Mammary epithelial cell (primary cell): ENCODE measurements at regions of chr9 and their contacts with region 1.

Region 1: GRCh38 chr9:35116898-35117551 is 1.4 kb upstream of the ATOSB start:
- DNase-seq: peak; percentile 84
- H3K4me3 ChIP-seq: peak overlapping the region; percentile 44 to 84 (median 60)
- H3K27ac ChIP-seq: no peak overlapping the region
- H3K4me1 ChIP-seq: peaks cover 23% of the 10 kb centered on the region
- H3K27me3 ChIP-seq: no peaks in the 10 kb centered on the region
- CTCF ChIP-seq: peak; percentile 95 to 99

Region 2: GRCh38 chr9:35071814-35072460 is 45.1 kb before region 1 on chr9:
- CTCF ChIA-PET with region 1: interaction called, 3 read pairs
- dilution Hi-C with region 1: no loop called
- in situ Hi-C with region 1: no loop called
- intact Hi-C with region 1: loop called (anchors 1 kb)
- DNase-seq: peak; percentile 86
- H3K4me3 ChIP-seq: peak overlapping the region; percentile 92 to 95 (median 94)
- H3K27ac ChIP-seq: peak overlapping the region; percentile 92
- H3K4me1 ChIP-seq: peaks cover 34% of the 10 kb centered on the region
- H3K27me3 ChIP-seq: no peaks in the 10 kb centered on the region
- CTCF ChIP-seq: peak in 1 of 2 donors; percentile 38

Region 3: GRCh38 chr9:35161713-35162604 is 44.9 kb after region 1 on chr9 and contains the start of gene UNC13B:
- CTCF ChIA-PET with region 1: no interaction called
- dilution Hi-C with region 1: no loop called
- in situ Hi-C with region 1: no loop called
- intact Hi-C with region 1: loop called (anchors 1 kb)
- DNase-seq: peak; percentile 91
- H3K4me3 ChIP-seq: peak within 1 kb of the TSS; percentile 71 to 97 (median 90)
- H3K27ac ChIP-seq: peak within 1 kb of the TSS; percentile 53
- H3K4me1 ChIP-seq: peaks cover 13% of the 10 kb centered on the region
- H3K27me3 ChIP-seq: no peaks in the 10 kb centered on the region
- CTCF ChIP-seq: peak in 1 of 2 donors; percentile 28
- total RNA-seq, gene UNC13B: 20.0 to 22.3 TPM

Region 4: DNA sequence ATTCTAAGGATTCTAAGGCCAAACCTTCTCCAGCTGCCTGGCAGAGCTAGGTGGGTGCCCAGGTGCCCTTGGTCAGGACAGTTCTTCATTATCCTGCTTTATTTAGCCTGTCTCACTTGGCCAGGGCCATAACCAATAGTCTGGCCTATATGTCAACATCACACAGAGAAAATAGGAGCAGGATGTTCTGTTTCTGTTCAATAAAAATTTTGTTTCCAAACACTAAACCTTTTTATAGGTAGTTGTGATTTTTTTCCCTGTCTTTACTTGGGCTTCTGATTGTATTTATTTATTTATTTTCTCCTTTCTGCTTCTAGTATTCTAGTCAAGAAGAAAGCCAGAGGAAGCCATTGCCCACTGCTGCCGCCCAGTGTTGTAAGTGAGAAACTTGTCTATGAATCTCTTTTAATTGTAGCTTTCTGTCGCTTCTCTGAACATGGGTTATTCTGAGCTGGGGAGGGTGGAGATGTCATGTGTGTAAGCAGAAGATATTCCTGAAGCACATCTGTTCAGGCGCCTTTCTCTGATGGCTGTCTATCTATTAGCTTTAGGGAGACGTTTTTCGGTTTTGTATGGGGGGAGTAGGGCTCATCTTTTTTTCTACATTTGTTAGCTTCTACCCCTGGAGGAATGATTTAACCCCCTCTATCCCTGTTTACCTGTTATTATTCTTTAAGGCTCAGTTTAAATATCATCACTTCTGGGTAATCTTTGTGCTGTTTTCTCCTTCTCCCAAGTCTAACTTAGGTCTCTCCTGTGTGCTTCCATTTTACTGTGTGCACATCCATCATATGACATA is 141.8 kb after region 1 on chr9:
- CTCF ChIA-PET with region 1: interaction called, 6 read pairs
- dilution Hi-C with region 1: no loop called
- in situ Hi-C with region 1: loop called (anchors 5 kb)
- intact Hi-C with region 1: loop called (anchors 1 kb)
- DNase-seq: peak; percentile 51
- H3K4me3 ChIP-seq: no peak overlapping the region
- H3K27ac ChIP-seq: no peak overlapping the region
- H3K4me1 ChIP-seq: no peaks in the 10 kb centered on the region
- H3K27me3 ChIP-seq: no peaks in the 10 kb centered on the region
- CTCF ChIP-seq: peak; percentile 58 to 74

Region 5: GRCh38 chr9:35357116-35357515 is 240.1 kb after region 1 on chr9:
- CTCF ChIA-PET with region 1: no interaction called
- dilution Hi-C with region 1: no loop called
- in situ Hi-C with region 1: no loop called
- intact Hi-C with region 1: no loop called
- DNase-seq: peak; percentile 4
- H3K4me3 ChIP-seq: no peak overlapping the region
- H3K27ac ChIP-seq: no peak overlapping the region
- H3K4me1 ChIP-seq: no peaks in the 10 kb centered on the region
- H3K27me3 ChIP-seq: no peaks in the 10 kb centered on the region
- CTCF ChIP-seq: no peak

Region 6: GRCh38 chr9:35385042-35385441 is 268.0 kb after region 1 on chr9:
- CTCF ChIA-PET with region 1: interaction called, 3 read pairs
- dilution Hi-C with region 1: no loop called
- in situ Hi-C with region 1: no loop called
- intact Hi-C with region 1: loop called (anchors 1 kb)
- DNase-seq: peak; percentile 14
- H3K4me3 ChIP-seq: no peak overlapping the region
- H3K27ac ChIP-seq: no peak overlapping the region
- H3K4me1 ChIP-seq: no peaks in the 10 kb centered on the region
- H3K27me3 ChIP-seq: no peaks in the 10 kb centered on the region
- CTCF ChIP-seq: peak; percentile 6 to 34

Region 7: DNA sequence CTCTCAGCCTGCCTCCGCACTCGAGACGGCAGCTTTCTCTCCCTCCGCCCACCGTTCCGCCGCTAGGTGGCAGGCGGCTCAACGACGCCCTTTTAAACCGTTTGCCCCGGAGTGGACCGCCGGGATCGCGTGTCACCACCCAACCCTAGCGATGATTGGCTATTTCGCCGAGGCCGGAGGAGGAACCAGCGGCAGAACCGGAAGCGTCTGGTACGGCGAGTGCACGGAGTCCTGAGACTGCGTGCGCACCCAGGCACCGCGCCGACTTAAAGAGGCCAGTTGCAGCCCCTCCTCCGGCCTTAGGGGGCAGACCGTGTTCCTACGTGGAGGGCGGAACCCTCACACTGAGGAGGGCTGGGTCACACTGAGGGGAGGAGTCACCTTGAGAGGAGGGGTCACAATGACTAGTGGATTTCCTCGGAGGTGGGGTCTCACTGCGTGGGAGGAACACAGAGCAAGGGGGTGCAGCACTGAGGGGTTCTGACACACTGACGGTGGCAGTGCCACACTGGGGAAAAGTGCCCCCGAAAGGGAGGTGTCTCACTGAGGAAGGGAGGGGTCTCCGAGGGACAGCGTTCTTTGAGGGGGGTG is 487.1 kb after region 1 on chr9:
- CTCF ChIA-PET with region 1: no interaction called
- dilution Hi-C with region 1: no loop called
- in situ Hi-C with region 1: no loop called
- intact Hi-C with region 1: loop called (anchors 10 kb)
- DNase-seq: peak; percentile 99
- H3K4me3 ChIP-seq: peak overlapping the region; percentile 60 to 67 (median 64)
- H3K27ac ChIP-seq: peak overlapping the region; percentile 68
- H3K4me1 ChIP-seq: peaks cover 28% of the 10 kb centered on the region
- H3K27me3 ChIP-seq: no peaks in the 10 kb centered on the region
- CTCF ChIP-seq: peak; percentile 82 to 83